ENCODE measurements at regions of chr18 and their contacts with region 1.

Region 1: DNA sequence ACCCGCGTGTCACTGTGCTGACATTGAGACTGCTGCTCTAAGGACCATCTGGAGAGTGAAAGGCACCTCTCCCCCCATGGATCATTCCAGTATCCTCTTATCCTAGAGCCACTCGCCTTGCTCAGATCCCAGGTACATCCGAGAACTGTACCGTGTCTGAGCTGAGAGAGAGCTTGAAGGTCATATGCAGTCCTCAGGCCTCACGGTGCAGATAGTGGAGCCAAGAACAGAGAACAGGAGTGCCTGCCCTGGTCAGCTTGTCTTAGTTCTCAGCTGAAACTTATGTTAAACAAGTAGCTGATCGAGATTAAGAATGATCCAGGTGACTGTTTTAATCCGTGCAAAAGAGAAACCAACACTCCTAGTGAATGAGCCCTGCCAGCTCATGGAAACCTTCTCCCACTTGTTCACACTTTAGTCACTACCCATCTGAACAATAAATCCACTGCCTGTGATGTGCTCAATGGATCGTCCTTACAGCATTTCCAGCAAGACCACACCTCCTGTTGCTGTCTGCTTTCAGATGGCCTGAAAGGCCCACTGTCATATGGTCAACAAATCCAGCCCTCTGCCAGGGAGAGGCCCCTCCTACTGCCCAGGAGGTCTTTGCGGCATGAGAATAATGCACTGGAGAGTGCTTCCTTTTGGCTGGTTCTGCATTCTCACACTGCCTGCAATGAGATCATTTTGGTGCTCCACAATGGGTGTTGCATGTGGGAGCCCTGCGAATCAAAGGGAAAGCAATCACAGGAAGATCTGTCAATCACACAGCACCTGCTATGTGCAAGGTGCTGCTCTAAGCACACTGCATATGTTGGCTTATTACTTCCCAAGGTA is 43.7 kb upstream of the APCDD1 start:
- DNase-seq: no peak
- ATAC-seq: no peak
- H3K4me3 ChIP-seq: no peak overlapping the region
- H3K27ac ChIP-seq: no peak overlapping the region
- H3K4me1 ChIP-seq: no peaks in the 10 kb centered on the region
- H3K27me3 ChIP-seq: peaks cover 0 to 4% (median 0%) of the 10 kb centered on the region in 3 donors
- CTCF ChIP-seq: no peak

Region 2: GRCh38 chr18:10353791-10354190 is 56.9 kb before region 1 on chr18:
- intact Hi-C with region 1: loop called in 1 of 2 experiments (anchors 10 kb)
- DNase-seq: no peak
- ATAC-seq: peak in 2 of 4 donors; percentile 47 to 57
- H3K4me3 ChIP-seq: no peak overlapping the region
- H3K27ac ChIP-seq: no peak overlapping the region
- H3K4me1 ChIP-seq: peaks cover 4% of the 10 kb centered on the region
- H3K27me3 ChIP-seq: no peaks in the 10 kb centered on the region
- CTCF ChIP-seq: no peak

Measured in psoas muscle (tissue), 8 donors.